Activated T-helper 2 cell treated with anti-CD3 and anti-CD28 coated beads, Interferon-gamma antibody, Interleukin-2, Interleukin-4, amounts not matched to agents 10 μg/mL and 5 μg/mL and 100 μg/mL, durations not matched to agents 14 hours and 24 hours and 36 hours (primary cell): ENCODE measurements at regions of chr10 and their contacts with region 1.

Region 1: DNA sequence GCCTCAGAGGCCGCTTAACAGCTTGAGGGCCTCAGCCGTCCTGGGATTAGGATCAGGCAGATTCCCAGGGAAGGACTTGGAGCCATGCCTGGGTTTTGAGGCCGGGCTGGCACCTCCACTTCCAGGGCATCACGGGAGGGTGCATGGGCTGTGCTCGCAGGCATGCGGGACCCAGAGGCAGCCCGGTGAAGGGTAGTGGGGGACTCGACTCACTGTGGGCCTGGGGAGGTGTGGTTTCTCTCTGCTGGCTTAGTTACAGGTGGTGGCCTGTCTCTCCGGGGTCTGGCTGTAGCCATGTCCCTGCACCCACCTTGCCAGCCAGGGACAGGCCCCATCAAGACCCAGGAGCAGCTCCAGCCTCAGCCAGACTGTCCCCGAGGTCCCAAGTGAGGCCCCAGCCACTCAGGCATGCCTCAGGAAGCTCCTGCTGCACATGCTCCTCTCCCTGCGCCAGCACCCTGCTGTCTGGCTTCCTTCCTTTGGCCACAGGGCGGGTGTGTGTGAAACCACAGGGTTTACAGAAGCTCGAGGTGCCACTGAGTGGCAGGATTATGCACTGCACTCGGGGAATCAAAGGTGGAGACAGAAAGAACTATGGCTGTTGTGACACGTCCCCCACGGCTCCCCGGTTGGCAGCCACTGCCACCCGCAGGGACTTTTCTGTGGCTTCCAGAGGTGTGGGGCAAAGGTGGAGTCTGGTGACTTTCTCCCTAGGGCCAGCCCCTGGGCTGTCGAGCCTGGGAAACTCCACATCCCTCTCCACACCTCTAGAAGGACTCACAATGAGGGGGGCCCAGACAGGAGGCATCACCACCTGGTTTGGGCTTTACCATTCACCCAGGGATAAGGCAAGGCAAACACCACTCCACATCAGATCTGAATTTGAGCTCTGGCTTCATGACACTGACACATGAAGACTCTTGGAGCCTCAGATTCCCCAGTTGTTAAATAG is 19.7 kb downstream of the GOLGA7B start:
- DNase-seq: peak; percentile 81
- H3K4me3 Mint-ChIP-seq: no peak overlapping the region
- H3K27ac Mint-ChIP-seq: no peak overlapping the region
- H3K4me1 Mint-ChIP-seq: peaks cover 10% of the 10 kb centered on the region
- H3K27me3 Mint-ChIP-seq: peaks cover 7% of the 10 kb centered on the region

Region 2: DNA sequence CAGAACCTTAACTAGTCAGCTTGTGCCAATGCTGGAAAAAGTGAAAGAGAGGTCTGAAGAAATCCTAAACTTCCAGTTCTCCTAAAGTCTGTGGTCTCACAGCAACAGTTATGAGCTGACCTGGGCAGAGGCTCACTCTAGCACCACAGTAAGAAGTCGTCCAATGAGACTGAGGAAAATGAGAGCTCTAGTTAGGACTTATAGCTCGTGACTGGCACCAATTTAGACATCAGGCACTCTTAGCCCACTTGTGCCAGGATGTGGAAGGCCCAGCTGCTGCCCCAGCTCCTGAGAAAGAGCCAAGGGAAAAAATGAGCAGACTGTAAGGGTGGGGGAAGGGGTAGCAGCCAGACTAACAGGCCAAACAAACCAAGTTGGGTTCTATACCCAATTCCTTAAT is 378.8 kb before region 1 on chr10:
- intact Hi-C with region 1: no loop called
- DNase-seq: no peak
- H3K4me3 Mint-ChIP-seq: no peak overlapping the region
- H3K27ac Mint-ChIP-seq: peak overlapping the region; percentile 67
- H3K4me1 Mint-ChIP-seq: peaks cover 27% of the 10 kb centered on the region
- H3K27me3 Mint-ChIP-seq: no peaks in the 10 kb centered on the region

Region 3: GRCh38 chr10:97792141-97792721 is 77.1 kb before region 1 on chr10:
- intact Hi-C with region 1: loop called (anchors 1 kb)
- DNase-seq: peak; percentile 57
- H3K4me3 Mint-ChIP-seq: no peak overlapping the region
- H3K27ac Mint-ChIP-seq: no peak overlapping the region
- H3K4me1 Mint-ChIP-seq: peaks cover 14% of the 10 kb centered on the region
- H3K27me3 Mint-ChIP-seq: peaks cover 11% of the 10 kb centered on the region

Region 4: DNA sequence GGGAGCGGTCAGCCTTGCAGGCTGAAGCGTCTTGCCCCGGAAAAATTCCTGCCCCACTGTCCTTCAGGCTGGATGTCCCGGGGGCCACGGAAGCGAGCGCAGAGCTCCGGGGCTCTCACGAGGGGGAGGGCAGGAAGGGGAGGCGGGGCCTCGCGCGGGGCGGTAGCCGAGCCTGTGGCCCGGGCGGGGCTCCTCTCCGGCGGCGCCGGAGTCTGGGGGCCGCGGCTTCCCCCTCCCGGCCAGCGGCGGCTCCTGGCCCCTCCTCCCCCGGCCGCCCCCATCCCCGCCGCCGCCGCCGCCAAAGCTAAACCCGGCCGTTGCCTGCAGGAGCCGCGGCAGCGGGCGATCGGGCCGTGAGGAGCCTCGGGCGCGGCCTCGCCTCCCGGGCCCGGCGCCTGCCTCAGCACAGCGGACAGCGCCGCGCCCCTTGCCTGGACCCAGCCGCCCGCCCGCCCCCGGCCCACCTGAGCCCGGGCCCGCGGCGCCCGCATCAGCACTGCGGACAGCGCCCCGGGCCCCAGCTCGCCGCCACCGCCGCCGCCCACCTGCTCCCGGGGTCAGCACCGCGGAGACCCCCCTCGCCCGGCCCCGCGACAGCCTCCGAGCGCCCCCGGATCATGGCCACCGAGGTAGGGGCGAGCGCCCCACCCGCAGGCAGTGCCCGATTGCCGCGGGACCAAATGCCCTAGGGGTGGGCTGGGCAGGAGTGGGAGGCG is 19.5 kb before region 1 on chr10 and contains the start of gene GOLGA7B:
- intact Hi-C with region 1: loop called (anchors 2 kb)
- DNase-seq: peak; percentile 60
- H3K4me3 Mint-ChIP-seq: peak within 1 kb of the TSS; percentile 79
- H3K27ac Mint-ChIP-seq: no peak within 1 kb of the TSS
- H3K4me1 Mint-ChIP-seq: peaks cover 34% of the 10 kb centered on the region
- H3K27me3 Mint-ChIP-seq: peaks cover 11% of the 10 kb centered on the region
- total RNA-seq, gene GOLGA7B: 0.34 and 0.62 TPM in 2 replicates

Region 5: GRCh38 chr10:97858001-97858439 is 11.3 kb before region 1 on chr10:
- intact Hi-C with region 1: loop called (anchors 1 kb)
- DNase-seq: no peak
- H3K4me3 Mint-ChIP-seq: no peak overlapping the region
- H3K27ac Mint-ChIP-seq: no peak overlapping the region
- H3K4me1 Mint-ChIP-seq: peaks cover 19% of the 10 kb centered on the region
- H3K27me3 Mint-ChIP-seq: peaks cover 4% of the 10 kb centered on the region